ENCODE measurements at regions of chr16 and their contacts with region 1.

Region 1: DNA sequence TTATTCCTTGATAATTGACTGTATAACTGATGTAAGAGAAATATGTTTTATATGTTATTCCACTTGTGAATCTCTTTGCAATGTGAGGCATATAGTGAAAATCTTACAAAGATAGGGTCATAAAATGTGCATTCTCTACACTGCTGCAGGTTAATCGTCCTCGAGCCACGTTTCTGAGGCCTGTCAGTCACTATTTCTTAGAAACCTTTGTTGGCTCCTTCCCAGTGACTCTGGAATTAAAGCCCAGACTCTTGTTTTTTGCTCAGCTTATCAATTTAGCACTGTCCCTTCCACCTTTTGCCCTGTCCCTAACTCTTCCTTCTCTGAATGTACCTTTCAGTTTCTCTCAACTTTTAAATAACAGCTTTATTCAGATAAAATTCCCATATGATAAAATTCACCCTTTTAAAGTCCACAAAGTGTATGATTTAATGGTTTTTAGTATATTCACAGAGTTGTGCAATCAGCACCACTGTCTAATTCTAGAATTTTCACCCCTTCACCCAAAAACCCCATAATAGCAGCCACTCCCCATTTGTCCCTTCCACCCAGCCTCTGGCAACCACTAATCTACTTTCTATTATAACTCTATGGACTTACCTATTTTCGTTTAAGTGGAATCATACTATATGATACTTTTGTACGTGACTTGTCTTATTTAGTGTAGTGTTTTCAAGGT is 8.6 kb downstream of the TNRC6A start:
- DNase-seq: no peak
- ATAC-seq: no peak
- H3K4me3 ChIP-seq: no peak overlapping the region
- H3K4me3 Mint-ChIP-seq: peak overlapping the region; percentile 11
- H3K27ac ChIP-seq: no peak overlapping the region
- H3K27ac Mint-ChIP-seq: no peak overlapping the region
- H3K4me1 ChIP-seq: peaks cover 42% of the 10 kb centered on the region
- H3K4me1 Mint-ChIP-seq: peaks cover 96% of the 10 kb centered on the region
- H3K27me3 ChIP-seq: no peaks in the 10 kb centered on the region
- H3K27me3 Mint-ChIP-seq: no peaks in the 10 kb centered on the region
- CTCF ChIP-seq: no peak

Region 2: DNA sequence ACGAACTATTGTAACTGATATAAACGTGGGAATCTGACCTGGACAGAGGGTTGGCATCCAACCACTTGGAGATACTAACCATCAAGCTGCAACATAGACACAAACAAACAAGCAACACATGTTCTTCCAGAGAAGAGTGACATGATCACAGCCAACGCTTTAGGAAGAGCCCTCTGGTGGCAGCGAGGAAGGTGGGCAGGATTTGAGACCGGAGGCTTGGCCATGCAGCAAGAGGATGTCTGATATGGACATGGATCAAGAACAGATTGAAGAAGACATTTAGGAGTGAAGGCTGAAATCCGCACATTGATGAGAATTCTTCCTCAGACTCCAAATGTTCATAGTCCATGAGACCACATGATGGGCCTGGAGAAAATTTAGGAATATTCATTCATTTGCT is 48.9 kb before region 1 on chr16:
- CTCF ChIA-PET with region 1: no interaction called
- POLR2A ChIA-PET with region 1: no interaction called
- intact Hi-C with region 1: no loop called
- DNase-seq: peak in 1 of 9 experiments; percentile 3
- ATAC-seq: no peak
- H3K4me3 ChIP-seq: no peak overlapping the region
- H3K4me3 Mint-ChIP-seq: no peak overlapping the region
- H3K27ac ChIP-seq: no peak overlapping the region
- H3K27ac Mint-ChIP-seq: no peak overlapping the region
- H3K4me1 ChIP-seq: no peaks in the 10 kb centered on the region
- H3K4me1 Mint-ChIP-seq: no peaks in the 10 kb centered on the region
- H3K27me3 ChIP-seq: peaks cover 0 to 2% of the 10 kb centered on the region in 2 experiments
- H3K27me3 Mint-ChIP-seq: peaks cover 13% of the 10 kb centered on the region
- CTCF ChIP-seq: no peak

Region 3: DNA sequence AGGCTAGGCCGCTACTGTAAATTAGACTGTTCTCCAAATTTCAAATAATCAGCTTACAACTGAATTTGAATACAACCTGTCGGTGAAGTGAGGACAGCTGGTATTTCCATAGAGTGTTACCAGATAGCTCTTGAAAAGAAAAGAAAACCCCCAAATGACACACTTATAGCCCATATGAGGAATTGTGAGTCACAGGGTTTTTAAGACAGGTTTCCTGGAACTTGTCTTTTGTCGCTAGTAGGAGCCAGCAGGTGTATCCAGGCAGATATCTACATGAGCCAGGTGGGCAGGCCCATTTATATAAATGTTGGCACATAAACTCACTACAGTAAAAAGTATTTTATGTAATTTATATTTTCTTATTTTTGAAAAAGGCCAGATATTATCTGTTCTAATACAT is 15.4 kb after region 1 on chr16:
- CTCF ChIA-PET with region 1: no interaction called
- POLR2A ChIA-PET with region 1: interaction called, 4 read pairs
- intact Hi-C with region 1: loop called in 1 of 2 experiments (anchors 2 kb)
- DNase-seq: no peak
- ATAC-seq: no peak
- H3K4me3 ChIP-seq: no peak overlapping the region
- H3K4me3 Mint-ChIP-seq: no peak overlapping the region
- H3K27ac ChIP-seq: no peak overlapping the region
- H3K27ac Mint-ChIP-seq: no peak overlapping the region
- H3K4me1 ChIP-seq: peaks cover 31% of the 10 kb centered on the region
- H3K4me1 Mint-ChIP-seq: peaks cover 70% of the 10 kb centered on the region
- H3K27me3 ChIP-seq: no peaks in the 10 kb centered on the region
- H3K27me3 Mint-ChIP-seq: no peaks in the 10 kb centered on the region
- CTCF ChIP-seq: no peak

Region 4: GRCh38 chr16:24789881-24790280 is 51.8 kb after region 1 on chr16:
- CTCF ChIA-PET with region 1: no interaction called
- POLR2A ChIA-PET with region 1: no interaction called
- intact Hi-C with region 1: no loop called
- DNase-seq: no peak
- ATAC-seq: no peak
- H3K4me3 ChIP-seq: no peak overlapping the region
- H3K4me3 Mint-ChIP-seq: no peak overlapping the region
- H3K27ac ChIP-seq: no peak overlapping the region
- H3K27ac Mint-ChIP-seq: no peak overlapping the region
- H3K4me1 ChIP-seq: no peaks in the 10 kb centered on the region
- H3K4me1 Mint-ChIP-seq: peaks cover 4% of the 10 kb centered on the region
- H3K27me3 ChIP-seq: no peaks in the 10 kb centered on the region
- H3K27me3 Mint-ChIP-seq: no peaks in the 10 kb centered on the region
- CTCF ChIP-seq: no peak